HCT116 (cell line): ENCODE measurements at regions of chr3 and their contacts with region 1.

Region 1: GRCh38 chr3:166013073-166013679 is 176.0 kb upstream of the BCHE start:
- DNase-seq: peak; percentile 23
- ATAC-seq: no peak
- H3K4me3 ChIP-seq: no peak overlapping the region
- H3K27ac ChIP-seq: no peak overlapping the region
- H3K4me1 ChIP-seq: no peaks in the 10 kb centered on the region
- H3K27me3 ChIP-seq: no peaks in the 10 kb centered on the region
- CTCF ChIP-seq: peak; percentile 39 to 64 (median 40); a peak in 5 of 6 replicates
- POLR2A ChIP-seq: no peak
- RAD21 ChIP-seq: peak; percentile 66

Region 2: DNA sequence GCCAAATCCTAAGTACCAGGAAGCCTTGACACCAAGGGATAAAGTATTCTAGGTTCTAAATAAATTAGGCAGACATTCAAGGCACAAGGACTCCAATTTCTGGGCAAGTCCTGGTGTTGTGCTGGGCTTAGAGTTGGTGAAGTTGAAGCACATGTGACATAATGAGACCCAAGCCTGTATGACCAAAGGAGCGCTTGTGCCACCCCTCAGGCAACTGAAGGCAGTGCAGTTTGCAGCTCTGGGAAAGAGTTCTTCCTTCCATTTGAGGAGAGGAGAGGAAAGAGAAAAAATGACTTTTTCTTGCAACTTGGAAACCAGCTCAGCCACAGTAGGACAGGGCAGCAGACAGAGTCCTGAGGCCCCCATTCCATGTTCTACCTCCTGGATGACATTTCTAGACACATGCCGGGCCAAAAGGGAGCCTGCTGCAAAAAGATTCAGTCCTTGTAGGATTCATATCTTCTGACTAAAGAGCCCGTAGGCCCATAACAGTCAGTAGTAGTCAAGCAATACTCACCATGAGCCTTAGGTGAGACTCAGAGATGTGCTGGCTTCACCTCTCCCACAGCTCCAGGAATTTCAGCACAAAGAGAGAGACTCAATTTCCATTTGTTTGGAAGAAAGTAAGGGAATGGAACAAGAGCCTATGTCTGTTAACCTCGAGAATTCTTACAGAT is 412.9 kb after region 1 on chr3:
- CTCF ChIA-PET with region 1: no interaction called
- POLR2A ChIA-PET with region 1: no interaction called
- RAD21 ChIA-PET with region 1: no interaction called
- intact Hi-C with region 1: loop called (anchors 2 kb)
- DNase-seq: no peak
- ATAC-seq: peak; percentile 77
- H3K4me3 ChIP-seq: no peak overlapping the region
- H3K27ac ChIP-seq: no peak overlapping the region
- H3K4me1 ChIP-seq: no peaks in the 10 kb centered on the region
- H3K27me3 ChIP-seq: no peaks in the 10 kb centered on the region
- CTCF ChIP-seq: peak; percentile 4 to 37 (median 35); a peak in 4 of 6 replicates
- POLR2A ChIP-seq: no peak
- RAD21 ChIP-seq: peak; percentile 63

Region 3: GRCh38 chr3:166902374-166902773 is 889.2 kb after region 1 on chr3:
- CTCF ChIA-PET with region 1: interaction called, 3 read pairs
- POLR2A ChIA-PET with region 1: no interaction called
- RAD21 ChIA-PET with region 1: no interaction called
- intact Hi-C with region 1: loop called (anchors 5 kb)
- DNase-seq: no peak
- ATAC-seq: no peak
- H3K4me3 ChIP-seq: no peak overlapping the region
- H3K27ac ChIP-seq: no peak overlapping the region
- H3K4me1 ChIP-seq: no peaks in the 10 kb centered on the region
- H3K27me3 ChIP-seq: no peaks in the 10 kb centered on the region
- CTCF ChIP-seq: peak in 2 of 3 experiments; percentile 21 to 35; a peak in 3 of 6 replicates
- POLR2A ChIP-seq: no peak
- RAD21 ChIP-seq: peak; percentile 44